Activated CD8-positive, alpha-beta T cell treated with anti-CD3 and anti-CD28 coated beads, Interleukin-2, amount 10 ng/mL, durations not matched to agents 7 days and 5 days (primary cell): ENCODE measurements at regions of chr12 and their contacts with region 1.

Region 1: DNA sequence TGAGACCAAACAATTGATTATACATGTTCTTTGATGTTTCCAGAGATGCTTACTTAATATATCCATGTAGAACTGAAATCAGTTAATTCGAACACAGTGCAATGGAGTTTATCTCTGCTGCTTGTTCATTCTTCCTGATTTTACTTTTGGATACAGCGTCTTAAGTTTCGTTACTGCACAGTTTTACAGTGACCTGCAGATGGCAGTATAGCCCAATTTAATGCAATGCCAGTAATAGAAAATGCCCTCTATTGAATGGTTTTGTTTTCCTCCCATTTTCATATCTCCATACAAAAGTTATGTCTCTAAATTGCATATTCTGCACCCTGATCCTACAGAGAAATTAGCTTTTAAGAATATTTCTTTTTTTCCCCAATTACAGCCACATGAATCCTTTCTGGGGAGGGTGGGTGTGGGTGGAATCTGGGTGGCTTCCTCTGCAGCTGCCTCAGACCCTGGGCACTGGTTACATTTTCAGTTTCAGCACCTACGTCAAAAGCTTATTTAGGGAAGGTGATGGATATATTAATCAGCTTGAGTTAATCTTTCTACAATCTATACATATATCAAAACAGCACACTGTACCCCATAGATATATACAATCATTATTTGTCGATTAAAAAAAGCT is 101.1 kb upstream of the DCD start:
- DNase-seq: peak; percentile 71
- ATAC-seq: peak; percentile 93
- H3K4me3 Mint-ChIP-seq: peak overlapping the region; percentile 55
- H3K27ac Mint-ChIP-seq: peak overlapping the region; percentile 16
- H3K4me1 Mint-ChIP-seq: peaks cover 21% of the 10 kb centered on the region
- H3K27me3 Mint-ChIP-seq: no peaks in the 10 kb centered on the region

Region 2: GRCh38 chr12:54680374-54680773 is 68.9 kb before region 1 on chr12:
- CTCF ChIA-PET with region 1: no interaction called
- POLR2A ChIA-PET with region 1: no interaction called
- DNase-seq: peak; percentile 48
- ATAC-seq: no peak
- H3K4me3 Mint-ChIP-seq: no peak overlapping the region
- H3K27ac Mint-ChIP-seq: no peak overlapping the region
- H3K4me1 Mint-ChIP-seq: peaks cover 5% of the 10 kb centered on the region
- H3K27me3 Mint-ChIP-seq: peaks cover 49% of the 10 kb centered on the region

Region 3: GRCh38 chr12:54701940-54702592 is 47.2 kb before region 1 on chr12:
- CTCF ChIA-PET with region 1: interaction called, 34 read pairs
- POLR2A ChIA-PET with region 1: no interaction called
- DNase-seq: peak; percentile 46
- ATAC-seq: peak; percentile 64
- H3K4me3 Mint-ChIP-seq: no peak overlapping the region
- H3K27ac Mint-ChIP-seq: no peak overlapping the region
- H3K4me1 Mint-ChIP-seq: no peaks in the 10 kb centered on the region
- H3K27me3 Mint-ChIP-seq: peaks cover 16% of the 10 kb centered on the region

Region 4: DNA sequence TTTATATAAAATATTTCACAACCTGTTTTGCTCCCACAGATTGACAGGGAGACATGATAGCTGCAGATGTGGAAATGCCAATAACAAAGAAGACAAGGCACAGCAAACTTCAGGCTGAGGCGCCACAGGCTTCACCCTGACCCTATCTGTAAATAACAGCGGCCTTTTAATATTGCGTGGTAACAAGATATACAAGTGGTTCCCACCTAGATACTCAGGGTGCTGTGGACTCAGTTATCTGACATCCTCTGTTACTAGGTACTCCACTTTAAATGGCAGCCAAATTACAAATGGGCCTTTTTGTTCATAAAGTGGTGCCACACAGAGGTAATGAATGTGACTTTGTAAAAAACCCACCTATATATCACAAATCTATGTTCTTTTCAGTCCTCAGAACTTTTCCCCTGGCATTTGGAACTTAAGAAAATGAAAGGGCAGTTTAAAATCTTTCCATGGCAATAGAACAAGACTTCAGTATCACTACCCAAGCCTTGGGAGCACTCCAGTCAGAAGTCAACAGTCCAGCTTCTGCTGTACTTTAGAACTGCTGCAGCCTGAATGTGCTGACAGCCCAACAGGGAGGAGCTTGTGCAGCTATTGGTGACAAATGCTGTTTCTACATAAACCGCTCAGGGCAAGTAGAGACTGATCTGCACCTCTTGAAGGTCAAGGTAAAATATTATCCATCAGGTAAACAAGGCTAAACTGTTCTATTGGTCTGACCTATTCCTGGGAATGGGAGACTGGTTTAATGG is 14.9 kb before region 1 on chr12:
- CTCF ChIA-PET with region 1: interaction called, 31 read pairs
- POLR2A ChIA-PET with region 1: no interaction called
- DNase-seq: no peak
- ATAC-seq: no peak
- H3K4me3 Mint-ChIP-seq: no peak overlapping the region
- H3K27ac Mint-ChIP-seq: no peak overlapping the region
- H3K4me1 Mint-ChIP-seq: peaks cover 29% of the 10 kb centered on the region
- H3K27me3 Mint-ChIP-seq: peaks cover 8% of the 10 kb centered on the region

Region 5: DNA sequence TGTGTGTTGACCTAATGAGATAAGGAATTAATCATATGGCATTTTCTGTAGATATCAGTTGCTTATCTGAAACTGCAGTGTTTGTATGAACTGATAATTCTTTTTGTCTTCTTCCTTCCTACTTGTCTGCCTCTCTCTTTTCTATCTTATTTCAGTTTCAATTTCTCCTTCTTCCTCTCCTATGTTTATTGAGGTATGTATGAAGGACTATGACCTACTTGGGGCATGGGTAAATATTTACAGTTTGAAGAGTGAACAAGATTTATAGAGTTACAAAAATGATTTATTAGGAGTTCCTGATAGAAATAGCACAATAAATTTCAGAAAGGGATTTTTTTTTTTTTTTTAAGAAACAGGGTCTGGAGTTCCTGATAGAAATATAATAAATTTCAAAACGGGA is 16.3 kb after region 1 on chr12:
- CTCF ChIA-PET with region 1: interaction called, 50 read pairs
- POLR2A ChIA-PET with region 1: no interaction called
- DNase-seq: no peak
- ATAC-seq: no peak
- H3K4me3 Mint-ChIP-seq: peak overlapping the region; percentile 30
- H3K27ac Mint-ChIP-seq: peak overlapping the region; percentile 79
- H3K4me1 Mint-ChIP-seq: peaks cover 23% of the 10 kb centered on the region
- H3K27me3 Mint-ChIP-seq: no peaks in the 10 kb centered on the region

Region 6: GRCh38 chr12:54935235-54935951 is 186.1 kb after region 1 on chr12:
- CTCF ChIA-PET with region 1: interaction called, 15 read pairs
- POLR2A ChIA-PET with region 1: no interaction called
- DNase-seq: peak; percentile 67
- ATAC-seq: peak; percentile 91
- H3K4me3 Mint-ChIP-seq: peak overlapping the region; percentile 36
- H3K27ac Mint-ChIP-seq: peak overlapping the region; percentile 97
- H3K4me1 Mint-ChIP-seq: peaks cover 54% of the 10 kb centered on the region
- H3K27me3 Mint-ChIP-seq: no peaks in the 10 kb centered on the region

Region 7: GRCh38 chr12:54967461-54967860 is 218.2 kb after region 1 on chr12:
- CTCF ChIA-PET with region 1: interaction called, 23 read pairs
- POLR2A ChIA-PET with region 1: no interaction called
- DNase-seq: no peak
- ATAC-seq: peak; percentile 35
- H3K4me3 Mint-ChIP-seq: no peak overlapping the region
- H3K27ac Mint-ChIP-seq: peak overlapping the region; percentile 84
- H3K4me1 Mint-ChIP-seq: peaks cover 36% of the 10 kb centered on the region
- H3K27me3 Mint-ChIP-seq: no peaks in the 10 kb centered on the region

Region 8: GRCh38 chr12:54993161-54993835 is 244.0 kb after region 1 on chr12:
- CTCF ChIA-PET with region 1: interaction called, 62 read pairs
- POLR2A ChIA-PET with region 1: no interaction called
- DNase-seq: peak; percentile 77
- ATAC-seq: peak; percentile 66
- H3K4me3 Mint-ChIP-seq: no peak overlapping the region
- H3K27ac Mint-ChIP-seq: no peak overlapping the region
- H3K4me1 Mint-ChIP-seq: peaks cover 36% of the 10 kb centered on the region
- H3K27me3 Mint-ChIP-seq: no peaks in the 10 kb centered on the region